HepG2 (cell line): ENCODE measurements at regions of chr2 and their contacts with region 1.

Region 1: DNA sequence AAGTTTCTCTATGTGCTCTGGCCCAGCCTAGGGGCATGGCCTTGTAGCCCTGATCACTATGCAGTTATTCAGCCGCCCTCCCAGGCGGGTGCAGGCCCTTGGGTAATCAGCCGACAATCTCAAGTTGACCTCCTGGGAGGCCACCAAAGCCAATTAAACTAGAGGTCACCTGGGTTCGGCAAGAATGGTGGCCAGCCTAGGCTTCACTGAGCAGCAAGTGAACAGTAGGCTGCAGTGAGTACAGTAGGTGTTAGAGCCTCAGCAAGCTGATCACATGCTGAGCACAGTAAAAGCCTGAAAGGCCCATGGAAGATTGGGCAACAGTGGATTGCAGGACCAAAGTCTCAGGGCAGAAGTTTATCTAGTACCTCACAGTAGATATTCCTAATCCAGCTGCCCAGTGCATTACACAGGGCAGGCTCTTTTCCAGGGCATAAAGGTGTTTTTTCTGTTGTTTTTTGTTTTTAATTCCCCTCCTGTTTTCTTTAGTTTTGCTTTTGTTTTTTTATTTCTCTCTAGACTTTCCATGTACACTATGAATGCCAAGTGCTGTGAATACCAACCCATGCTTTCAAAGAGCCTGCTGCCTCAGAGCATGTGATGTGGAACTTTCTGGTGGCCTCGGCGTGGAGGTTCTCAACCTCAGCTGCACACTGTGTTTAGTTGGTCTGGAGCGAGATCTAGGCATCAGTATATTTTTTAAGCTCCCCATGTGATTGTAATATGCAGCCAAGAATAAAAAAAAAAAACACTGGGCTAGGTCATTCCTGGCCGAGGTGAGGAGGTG is 55.9 kb upstream of the ATL2 start:
- DNase-seq: peak; percentile 92
- ATAC-seq: peak; percentile 94
- H3K4me3 ChIP-seq: peak overlapping the region in 1 of 3 experiments; percentile 1; a peak in 1 of 6 replicates
- H3K27ac ChIP-seq: peak overlapping the region; percentile 64
- H3K4me1 ChIP-seq: peaks cover 68% of the 10 kb centered on the region
- H3K27me3 ChIP-seq: no peaks in the 10 kb centered on the region; a peak in 1 of 5 replicates
- CTCF ChIP-seq: peak; percentile 21; the same call in 1 of the 2 replicates
- EP300 ChIP-seq: peak; percentile 80 to 92; a peak in 3 of 4 replicates
- POLR2A ChIP-seq: no peak
- RAD21 ChIP-seq: peak; percentile 60

Region 2: DNA sequence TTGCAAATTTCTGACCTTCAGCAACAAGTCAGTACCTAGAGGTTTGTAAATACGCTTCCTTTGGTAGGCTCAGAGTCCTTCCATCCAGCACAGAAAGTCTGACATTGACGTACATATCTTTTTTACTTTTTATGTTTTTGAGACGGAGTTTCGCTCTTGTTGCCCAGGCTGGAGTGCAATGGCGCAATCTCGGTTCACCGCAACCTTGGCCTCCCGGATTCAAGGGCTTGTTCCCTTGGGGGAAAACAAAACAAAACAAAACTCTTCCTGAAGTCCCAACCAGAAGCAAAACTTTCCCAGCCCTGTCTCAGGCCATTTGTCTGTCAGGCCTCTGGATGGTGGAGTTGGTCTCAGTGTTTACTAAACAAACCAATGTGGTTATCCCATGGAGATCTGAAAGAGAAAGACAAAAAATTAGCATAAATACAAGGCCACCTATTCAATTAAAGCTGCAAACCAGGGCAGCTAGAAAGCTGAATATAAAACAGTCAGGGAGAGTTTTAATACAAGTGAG is 26.4 kb before region 1 on chr2:
- CTCF ChIA-PET with region 1: no interaction called
- POLR2A ChIA-PET with region 1: no interaction called
- in situ Hi-C with region 1: no loop called
- intact Hi-C with region 1: loop called (anchors 2 kb)
- DNase-seq: peak; percentile 82
- ATAC-seq: peak; percentile 77
- H3K4me3 ChIP-seq: peak overlapping the region; percentile 49 to 56 (median 51)
- H3K27ac ChIP-seq: peak overlapping the region; percentile 86
- H3K4me1 ChIP-seq: peaks cover 55% of the 10 kb centered on the region
- H3K27me3 ChIP-seq: no peaks in the 10 kb centered on the region
- CTCF ChIP-seq: no peak
- EP300 ChIP-seq: peak in 1 of 2 experiments; percentile 73; a peak in 2 of 4 replicates
- POLR2A ChIP-seq: no peak
- RAD21 ChIP-seq: no peak

Region 3: GRCh38 chr2:39202639-39203369 is 769.8 kb after region 1 on chr2:
- CTCF ChIA-PET with region 1: no interaction called
- POLR2A ChIA-PET with region 1: no interaction called
- in situ Hi-C with region 1: no loop called
- intact Hi-C with region 1: no loop called
- DNase-seq: no peak
- ATAC-seq: no peak
- H3K4me3 ChIP-seq: no peak overlapping the region
- H3K27ac ChIP-seq: no peak overlapping the region
- H3K4me1 ChIP-seq: no peaks in the 10 kb centered on the region
- H3K27me3 ChIP-seq: no peaks in the 10 kb centered on the region
- CTCF ChIP-seq: no peak
- EP300 ChIP-seq: no peak
- POLR2A ChIP-seq: no peak
- RAD21 ChIP-seq: no peak